Esophagus squamous epithelium (tissue), 5 donors: ENCODE measurements at regions of chr2 and their contacts with region 1.

Region 1: DNA sequence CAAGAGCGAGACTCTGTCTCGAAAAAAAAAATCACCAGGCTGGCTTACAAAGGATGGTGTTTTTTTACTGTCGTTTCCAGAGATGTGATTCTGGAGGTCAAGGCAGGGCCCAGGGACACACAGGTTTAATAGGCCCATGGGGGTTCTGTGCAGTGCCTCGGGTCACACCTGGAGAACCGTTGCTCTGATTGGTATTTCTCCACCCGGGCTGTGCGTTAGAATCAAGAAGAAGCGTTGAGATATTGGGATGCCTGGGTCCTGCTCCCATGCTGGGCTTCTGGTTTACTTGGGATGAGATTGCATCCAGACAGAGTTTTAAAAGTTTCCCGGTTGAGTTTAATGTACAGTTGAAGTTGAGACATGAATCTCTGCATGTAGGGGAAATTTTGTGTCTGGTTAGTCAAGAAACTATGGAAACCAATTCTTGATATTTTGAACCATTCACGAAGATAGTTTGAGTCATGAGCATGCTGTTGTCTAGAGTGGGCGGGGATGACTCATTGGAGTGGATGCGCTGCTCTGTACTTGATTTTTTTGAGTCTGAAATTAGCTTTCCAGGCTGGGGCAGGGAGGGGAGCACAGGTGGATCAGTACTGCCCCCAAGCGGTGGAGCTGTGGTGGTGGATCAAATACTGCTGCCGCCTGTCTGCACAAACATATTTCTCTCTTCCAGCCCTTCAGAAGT is 50.1 kb downstream of the GREB1 start:
- DNase-seq: no peak
- H3K4me3 ChIP-seq: no peak overlapping the region
- H3K27ac ChIP-seq: peak overlapping the region in 2 of 4 donors; percentile 6 to 42
- H3K4me1 ChIP-seq: peaks cover 0 to 17% (median 8%) of the 10 kb centered on the region in 3 donors
- H3K27me3 ChIP-seq: no peaks in the 10 kb centered on the region
- CTCF ChIP-seq: peak; percentile 46 to 87 (median 78)
- POLR2A ChIP-seq: no peak

Region 2: DNA sequence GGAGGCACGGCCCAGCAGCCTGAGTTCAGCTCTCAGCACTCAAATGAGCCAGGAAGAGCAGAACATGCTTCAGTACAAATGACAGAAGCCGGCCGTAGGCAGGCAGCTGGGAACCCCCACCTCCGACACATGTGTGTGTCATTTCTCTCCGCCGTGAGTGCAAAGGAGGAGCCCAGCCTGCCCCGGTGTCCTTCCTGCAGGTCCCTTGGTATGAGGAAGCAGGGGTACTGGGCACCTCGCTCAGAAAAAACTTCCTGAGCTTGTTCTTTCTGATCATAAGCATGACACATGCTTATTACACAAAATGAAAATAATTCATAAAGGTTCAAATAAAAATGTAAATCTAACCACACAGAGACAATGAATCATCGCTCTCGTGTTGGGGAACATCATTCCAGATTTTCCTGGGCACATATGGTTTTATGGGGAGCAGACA is 637.0 kb before region 1 on chr2:
- intact Hi-C with region 1: no loop called
- DNase-seq: no peak
- H3K4me3 ChIP-seq: no peak overlapping the region
- H3K27ac ChIP-seq: no peak overlapping the region
- H3K4me1 ChIP-seq: no peaks in the 10 kb centered on the region
- H3K27me3 ChIP-seq: peaks cover 0 to 69% (median 0%) of the 10 kb centered on the region in 4 donors
- CTCF ChIP-seq: no peak
- POLR2A ChIP-seq: no peak

Region 3: DNA sequence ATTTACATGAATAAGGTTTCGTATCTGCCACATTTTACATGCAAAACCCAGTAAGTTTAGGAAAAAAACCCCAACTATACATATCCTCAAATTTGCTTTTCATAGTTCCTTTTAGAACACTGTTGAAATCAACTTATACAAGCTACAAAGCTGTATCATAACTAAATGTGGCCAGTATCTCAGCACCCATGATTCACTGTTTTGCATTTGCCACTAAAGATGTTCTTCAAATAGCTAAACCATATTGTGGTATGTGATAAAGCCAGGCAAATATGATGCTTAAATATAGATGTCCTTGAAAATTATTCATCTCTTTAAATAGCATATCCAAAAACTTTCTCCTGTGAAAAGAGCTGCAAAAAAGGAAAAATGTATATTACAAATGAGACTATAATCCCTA is 269.5 kb before region 1 on chr2:
- intact Hi-C with region 1: no loop called
- DNase-seq: no peak
- H3K4me3 ChIP-seq: no peak overlapping the region
- H3K27ac ChIP-seq: no peak overlapping the region
- H3K4me1 ChIP-seq: peaks cover 0 to 18% (median 10%) of the 10 kb centered on the region in 3 donors
- H3K27me3 ChIP-seq: no peaks in the 10 kb centered on the region
- CTCF ChIP-seq: no peak
- POLR2A ChIP-seq: no peak

Region 4: GRCh38 chr2:11446733-11447248 is 137.2 kb before region 1 on chr2:
- intact Hi-C with region 1: no loop called
- DNase-seq: no peak
- H3K4me3 ChIP-seq: no peak overlapping the region
- H3K27ac ChIP-seq: no peak overlapping the region
- H3K4me1 ChIP-seq: no peaks in the 10 kb centered on the region
- H3K27me3 ChIP-seq: no peaks in the 10 kb centered on the region
- CTCF ChIP-seq: peak; percentile 41 to 83 (median 72)
- POLR2A ChIP-seq: no peak

Region 5: DNA sequence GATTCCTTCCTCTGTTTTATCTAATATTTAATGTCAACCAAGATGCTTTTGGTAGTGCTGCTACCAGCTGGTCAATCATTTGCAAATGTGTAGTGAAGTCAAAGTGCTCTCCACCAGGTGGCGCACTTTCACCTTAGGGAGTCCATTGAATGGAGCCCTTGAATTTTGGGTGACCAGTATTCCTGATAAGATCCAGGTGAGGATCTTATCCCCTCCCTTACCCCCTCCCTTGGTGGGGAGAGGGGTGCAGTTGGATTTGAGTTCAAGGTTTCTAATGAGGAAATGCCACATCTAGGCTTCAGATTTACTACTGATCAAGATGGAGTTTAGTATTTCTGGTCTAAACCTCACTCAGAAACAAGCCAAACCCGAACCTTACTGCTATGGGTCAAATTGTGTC is 106.0 kb before region 1 on chr2:
- intact Hi-C with region 1: loop called (anchors 2 kb)
- DNase-seq: peak; percentile 13
- H3K4me3 ChIP-seq: no peak overlapping the region
- H3K27ac ChIP-seq: no peak overlapping the region
- H3K4me1 ChIP-seq: peaks cover 0 to 13% (median 10%) of the 10 kb centered on the region in 3 donors
- H3K27me3 ChIP-seq: peaks cover 0 to 46% (median 1%) of the 10 kb centered on the region in 4 donors
- CTCF ChIP-seq: peak; percentile 77 to 93 (median 84)
- POLR2A ChIP-seq: no peak

Region 6: DNA sequence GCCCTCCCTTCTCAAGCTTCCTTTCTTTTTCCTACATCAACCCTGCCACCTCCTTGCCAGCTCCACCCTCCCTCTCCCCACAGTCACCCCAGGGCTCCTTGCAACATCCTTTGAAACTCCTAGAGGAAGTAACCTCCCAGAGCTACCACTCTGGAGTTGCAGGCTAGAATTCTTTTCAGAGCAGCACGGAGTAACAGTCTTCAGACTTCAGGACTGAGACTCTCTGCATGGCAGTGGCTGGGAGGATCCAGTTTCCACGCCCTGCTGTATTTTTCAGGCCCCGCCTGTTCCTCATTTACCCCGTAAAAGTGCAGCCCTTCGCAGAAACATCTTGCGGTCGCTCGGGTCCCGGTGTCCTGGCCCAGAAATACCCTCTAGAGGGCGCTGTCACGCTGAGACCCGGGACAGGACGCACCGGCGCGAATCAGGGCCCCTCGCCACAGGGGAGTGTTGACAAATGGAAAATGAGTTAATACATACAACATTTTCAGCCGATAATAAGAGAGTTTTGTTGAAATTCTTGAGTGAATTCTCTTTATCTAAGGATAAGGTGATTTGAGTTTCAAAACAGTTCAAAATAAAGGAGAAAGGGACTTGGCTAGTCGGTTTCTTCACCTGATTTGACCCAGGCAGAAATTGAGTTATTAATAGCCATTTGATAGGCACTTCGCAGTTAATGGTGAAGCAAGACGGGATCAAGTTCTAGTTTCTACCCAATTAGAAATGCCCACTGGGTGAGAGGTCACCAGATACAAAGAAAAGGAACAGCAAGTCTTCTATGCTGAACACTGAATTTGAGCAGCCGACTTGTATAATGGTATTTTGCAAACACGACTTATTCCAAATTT is 104.5 kb after region 1 on chr2:
- intact Hi-C with region 1: no loop called
- DNase-seq: peak; percentile 30
- H3K4me3 ChIP-seq: peak overlapping the region in 2 of 4 donors; percentile 19 to 51
- H3K27ac ChIP-seq: peak overlapping the region in 3 of 4 donors; percentile 15 to 63 (median 38)
- H3K4me1 ChIP-seq: peaks cover 0 to 20% (median 15%) of the 10 kb centered on the region in 3 donors
- H3K27me3 ChIP-seq: peaks cover 0 to 30% (median 0%) of the 10 kb centered on the region in 4 donors
- CTCF ChIP-seq: peak; percentile 62 to 87 (median 84)
- POLR2A ChIP-seq: no peak